ENCODE measurements at regions of chr5 and their contacts with region 1.

Region 1: GRCh38 chr5:149724130-149724840 is 5.8 kb upstream of the PPARGC1B start:
- DNase-seq: no peak
- ATAC-seq: no peak
- H3K4me3 ChIP-seq: no peak overlapping the region
- H3K27ac ChIP-seq: no peak overlapping the region
- H3K4me1 ChIP-seq: peaks cover 0 to 14% (median 2%) of the 10 kb centered on the region in 12 donors
- H3K27me3 ChIP-seq: no peaks in the 10 kb centered on the region
- CTCF ChIP-seq: no peak
- POLR2A ChIP-seq: no peak

Region 2: DNA sequence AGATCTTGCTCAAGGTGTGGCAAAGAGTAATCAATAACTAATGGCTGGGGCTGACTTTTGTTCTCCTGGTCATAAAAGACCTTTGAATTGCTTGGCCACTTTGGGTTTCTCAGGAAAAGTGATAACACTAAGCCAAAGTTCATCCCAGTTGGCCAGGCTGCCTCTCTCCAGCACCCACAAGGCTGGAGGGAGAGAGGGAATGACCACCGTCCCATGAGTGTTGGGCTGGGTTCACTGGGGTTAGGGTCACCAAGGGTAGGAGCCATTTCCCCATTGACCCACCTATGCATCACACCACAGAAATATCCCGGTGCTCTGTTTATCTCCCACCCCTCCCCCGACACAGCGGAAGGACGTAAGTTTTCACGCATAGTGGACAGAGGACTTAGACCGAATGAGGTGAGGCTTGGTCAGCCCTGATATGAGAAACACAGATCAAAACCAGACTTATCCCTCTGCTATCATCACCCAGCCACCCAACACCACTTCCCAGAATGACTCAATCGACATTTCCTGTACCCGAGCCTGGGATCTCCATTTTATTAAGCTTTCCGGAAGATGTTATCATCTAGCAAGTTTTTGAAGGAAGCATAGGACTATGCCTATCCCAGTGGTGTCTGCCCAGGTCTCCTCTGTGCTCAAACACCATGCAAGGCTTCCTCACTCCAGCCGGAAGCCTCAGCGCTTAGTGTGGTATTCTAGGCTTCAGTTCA is 21.2 kb before region 1 on chr5:
- intact Hi-C with region 1: loop called in 1 of 10 experiments (anchors 2 kb)
- DNase-seq: no peak
- ATAC-seq: peak in 2 of 4 donors; percentile 22 to 32
- H3K4me3 ChIP-seq: no peak overlapping the region
- H3K27ac ChIP-seq: no peak overlapping the region
- H3K4me1 ChIP-seq: peaks cover 0 to 8% (median 0%) of the 10 kb centered on the region in 12 donors
- H3K27me3 ChIP-seq: peaks cover 0 to 3% (median 0%) of the 10 kb centered on the region in 9 donors
- CTCF ChIP-seq: no peak
- POLR2A ChIP-seq: no peak

Region 3: DNA sequence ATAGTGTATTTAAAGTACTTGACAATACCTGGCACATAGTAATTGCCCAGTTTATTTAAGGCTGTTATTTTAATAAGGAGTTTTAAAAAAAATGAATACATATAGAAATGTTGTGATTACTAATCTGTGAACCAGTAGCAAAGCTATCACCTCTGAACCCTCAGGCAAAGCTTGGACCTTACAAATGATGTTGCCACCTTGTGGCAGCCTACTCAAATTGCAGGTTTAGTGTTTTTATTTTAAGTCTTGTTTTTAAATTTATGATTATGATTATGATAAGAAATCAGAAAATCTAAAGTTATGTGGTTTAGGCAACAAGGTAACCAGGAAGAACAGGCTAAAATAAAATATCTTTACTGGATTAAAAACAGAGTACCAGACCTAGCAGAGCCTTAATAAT is 41.6 kb after region 1 on chr5:
- intact Hi-C with region 1: no loop called
- DNase-seq: no peak
- ATAC-seq: no peak
- H3K4me3 ChIP-seq: no peak overlapping the region
- H3K27ac ChIP-seq: peak overlapping the region in 7 of 12 donors; percentile 36 to 68 (median 60)
- H3K4me1 ChIP-seq: peaks cover 0 to 82% (median 24%) of the 10 kb centered on the region in 12 donors
- H3K27me3 ChIP-seq: no peaks in the 10 kb centered on the region
- CTCF ChIP-seq: peak in 8 of 12 donors; percentile 9 to 39 (median 26)
- POLR2A ChIP-seq: no peak